ENCODE measurements at regions of chr14 and their contacts with region 1.

Region 1: GRCh38 chr14:71320107-71320733 is 413.0 kb downstream of the PCNX1 start:
- DNase-seq: peak; percentile 92 to 100 (median 97)

Region 2: DNA sequence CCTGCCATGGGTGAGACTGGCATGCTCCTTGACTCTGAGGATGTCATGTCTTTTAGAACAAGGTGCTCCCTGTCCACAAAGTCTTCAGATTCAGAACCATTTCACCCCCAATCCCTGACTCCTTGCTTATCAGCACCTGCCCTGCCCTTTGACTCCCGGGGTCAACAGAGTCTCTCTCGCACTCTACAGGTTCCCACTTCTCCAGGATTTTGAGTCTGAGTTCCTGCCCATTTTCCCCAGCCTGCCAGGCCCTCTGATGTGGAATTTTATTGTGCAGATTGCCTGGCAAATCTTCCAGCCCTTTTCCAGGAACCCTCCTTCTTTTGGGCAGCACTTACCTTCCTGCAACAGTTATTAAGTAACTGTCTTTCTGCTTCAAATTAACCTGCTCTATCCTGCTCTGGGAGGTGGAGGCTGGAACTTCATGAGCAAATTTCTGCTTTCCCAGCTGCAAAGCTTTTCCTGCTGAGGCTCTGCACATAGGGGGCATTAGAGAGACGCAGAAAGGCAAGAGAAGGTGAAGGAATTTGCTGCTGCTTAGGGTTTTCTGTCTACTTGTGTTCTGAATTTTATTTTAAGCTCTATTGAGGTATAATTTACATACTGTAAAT is 153.9 kb before region 1 on chr14:
- intact Hi-C with region 1: loop called (anchors 5 kb)
- DNase-seq: peak in 4 of 10 donors; percentile 22 to 44 (median 36)

Region 3: DNA sequence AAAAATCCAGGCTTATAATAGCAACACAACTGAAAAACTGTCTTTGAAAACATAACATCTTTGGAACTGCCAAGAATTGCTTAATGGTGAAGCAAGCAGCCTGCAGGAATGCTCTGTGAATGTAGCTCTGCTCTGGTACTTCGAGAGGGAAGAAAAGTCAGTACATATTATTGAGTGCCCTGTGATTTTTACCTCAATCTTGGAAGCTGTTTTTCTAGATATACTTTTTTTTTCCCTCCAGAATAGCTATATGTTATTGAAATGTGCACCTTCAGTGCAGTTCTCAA is 95.1 kb after region 1 on chr14:
- intact Hi-C with region 1: no loop called
- DNase-seq: no peak

Region 4: DNA sequence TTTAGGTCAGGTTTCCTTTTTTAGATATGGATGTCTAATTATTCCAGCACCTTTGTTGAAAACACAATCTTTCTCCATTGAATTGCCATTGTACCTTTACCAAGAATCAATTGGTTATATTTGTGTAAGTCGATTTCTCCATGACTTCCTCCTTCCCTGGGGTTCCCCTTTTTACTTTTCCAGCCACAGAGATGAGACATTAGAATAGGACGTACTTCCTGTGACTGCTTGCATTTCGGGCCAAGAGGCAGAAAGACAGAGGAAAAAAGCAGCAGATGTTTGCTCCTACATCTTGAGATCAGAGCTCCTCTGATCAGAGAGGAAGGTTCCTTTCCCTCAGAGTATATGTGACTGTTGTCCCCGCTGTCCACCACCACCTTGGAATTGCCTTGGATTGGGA is 158.3 kb after region 1 on chr14:
- intact Hi-C with region 1: loop called (anchors 10 kb)
- DNase-seq: no peak

Region 5: GRCh38 chr14:71597955-71598660 is 277.9 kb after region 1 on chr14:
- intact Hi-C with region 1: loop called (anchors 5 kb)
- DNase-seq: no peak

Measured in posterior cingulate gyrus (tissue), 11 donors.